ENCODE measurements at regions of chr1 and their contacts with region 1.

Region 1: GRCh38 chr1:182143154-182143657 is 81.7 kb upstream of the ZNF648 start:
- DNase-seq: peak; percentile 94
- H3K4me3 Mint-ChIP-seq: peak overlapping the region; percentile 28
- H3K27ac Mint-ChIP-seq: peak overlapping the region; percentile 97
- H3K4me1 Mint-ChIP-seq: peaks cover 53% of the 10 kb centered on the region
- H3K27me3 Mint-ChIP-seq: no peaks in the 10 kb centered on the region
- CTCF ChIP-seq: peak; percentile 95

Region 2: GRCh38 chr1:181855380-181855779 is 287.8 kb before region 1 on chr1:
- CTCF ChIA-PET with region 1: no interaction called
- POLR2A ChIA-PET with region 1: no interaction called
- intact Hi-C with region 1: no loop called
- DNase-seq: no peak
- H3K4me3 Mint-ChIP-seq: no peak overlapping the region
- H3K27ac Mint-ChIP-seq: no peak overlapping the region
- H3K4me1 Mint-ChIP-seq: no peaks in the 10 kb centered on the region
- H3K27me3 Mint-ChIP-seq: no peaks in the 10 kb centered on the region
- CTCF ChIP-seq: no peak

Region 3: GRCh38 chr1:182029379-182030331 is 113.6 kb before region 1 on chr1:
- CTCF ChIA-PET with region 1: no interaction called
- POLR2A ChIA-PET with region 1: no interaction called
- intact Hi-C with region 1: no loop called
- DNase-seq: peak; percentile 99
- H3K4me3 Mint-ChIP-seq: peak overlapping the region; percentile 85
- H3K27ac Mint-ChIP-seq: peak overlapping the region; percentile 91
- H3K4me1 Mint-ChIP-seq: peaks cover 10% of the 10 kb centered on the region
- H3K27me3 Mint-ChIP-seq: no peaks in the 10 kb centered on the region
- CTCF ChIP-seq: peak; percentile 42

Region 4: DNA sequence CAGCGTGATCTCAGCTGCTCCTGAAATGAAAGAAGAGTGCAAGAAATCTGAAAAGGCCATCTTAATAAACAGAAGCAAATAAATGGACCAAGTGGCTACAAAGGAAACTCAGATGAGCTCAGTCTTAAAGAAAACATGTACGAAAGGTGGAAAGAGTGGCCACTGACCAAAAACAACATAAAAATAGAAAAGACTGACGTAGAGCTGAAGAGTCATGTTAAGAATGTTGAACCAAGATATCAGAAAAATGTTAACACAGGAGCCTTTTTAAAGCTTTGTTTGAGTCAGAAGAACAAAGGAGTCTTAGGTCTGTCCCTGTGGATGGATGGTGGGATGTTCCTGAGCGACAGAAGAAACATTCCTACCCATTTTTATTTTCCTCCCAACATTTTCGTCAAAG is 50.9 kb before region 1 on chr1:
- CTCF ChIA-PET with region 1: interaction called, 175 read pairs
- POLR2A ChIA-PET with region 1: interaction called, 51 read pairs
- intact Hi-C with region 1: no loop called
- DNase-seq: no peak
- H3K4me3 Mint-ChIP-seq: no peak overlapping the region
- H3K27ac Mint-ChIP-seq: no peak overlapping the region
- H3K4me1 Mint-ChIP-seq: peaks cover 15% of the 10 kb centered on the region
- H3K27me3 Mint-ChIP-seq: no peaks in the 10 kb centered on the region
- CTCF ChIP-seq: no peak

Region 5: GRCh38 chr1:182175361-182175931 is 32.2 kb after region 1 on chr1:
- CTCF ChIA-PET with region 1: interaction called, 163 read pairs
- POLR2A ChIA-PET with region 1: interaction called, 321 read pairs
- intact Hi-C with region 1: no loop called
- DNase-seq: peak; percentile 84
- H3K4me3 Mint-ChIP-seq: no peak overlapping the region
- H3K27ac Mint-ChIP-seq: peak overlapping the region; percentile 74
- H3K4me1 Mint-ChIP-seq: peaks cover 40% of the 10 kb centered on the region
- H3K27me3 Mint-ChIP-seq: no peaks in the 10 kb centered on the region
- CTCF ChIP-seq: no peak

Region 6: DNA sequence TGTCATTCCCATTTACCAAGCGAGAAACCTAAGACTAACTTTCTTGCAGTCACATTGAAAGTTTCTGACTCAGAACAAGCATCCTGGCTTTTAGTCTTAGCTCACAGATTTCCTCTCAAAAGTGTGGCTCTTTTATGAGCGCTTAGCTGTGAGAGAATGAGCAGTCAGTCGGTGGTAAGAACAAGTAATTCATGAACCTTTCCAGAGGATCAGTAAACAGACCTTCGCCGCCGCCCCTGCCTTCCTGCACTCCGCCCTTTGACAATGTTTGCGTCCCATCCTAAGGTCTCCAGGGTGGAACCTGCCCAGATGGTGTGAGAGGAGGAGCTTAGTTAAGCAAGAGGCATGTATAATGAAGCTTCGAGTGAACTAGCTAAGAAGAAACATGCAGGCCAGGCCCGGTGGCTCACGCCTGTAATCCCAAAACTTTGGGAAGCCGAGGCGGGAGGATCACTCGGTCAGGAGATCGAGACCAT is 106.0 kb after region 1 on chr1:
- CTCF ChIA-PET with region 1: interaction called, 15 read pairs
- POLR2A ChIA-PET with region 1: interaction called, 15 read pairs
- intact Hi-C with region 1: no loop called
- DNase-seq: no peak
- H3K4me3 Mint-ChIP-seq: no peak overlapping the region
- H3K27ac Mint-ChIP-seq: no peak overlapping the region
- H3K4me1 Mint-ChIP-seq: peaks cover 5% of the 10 kb centered on the region
- H3K27me3 Mint-ChIP-seq: no peaks in the 10 kb centered on the region
- CTCF ChIP-seq: no peak

Region 7: GRCh38 chr1:182337736-182338571 is 194.7 kb after region 1 on chr1:
- CTCF ChIA-PET with region 1: interaction called, 10 read pairs
- POLR2A ChIA-PET with region 1: no interaction called
- intact Hi-C with region 1: no loop called
- DNase-seq: no peak
- H3K4me3 Mint-ChIP-seq: no peak overlapping the region
- H3K27ac Mint-ChIP-seq: no peak overlapping the region
- H3K4me1 Mint-ChIP-seq: no peaks in the 10 kb centered on the region
- H3K27me3 Mint-ChIP-seq: no peaks in the 10 kb centered on the region
- CTCF ChIP-seq: no peak

Region 8: DNA sequence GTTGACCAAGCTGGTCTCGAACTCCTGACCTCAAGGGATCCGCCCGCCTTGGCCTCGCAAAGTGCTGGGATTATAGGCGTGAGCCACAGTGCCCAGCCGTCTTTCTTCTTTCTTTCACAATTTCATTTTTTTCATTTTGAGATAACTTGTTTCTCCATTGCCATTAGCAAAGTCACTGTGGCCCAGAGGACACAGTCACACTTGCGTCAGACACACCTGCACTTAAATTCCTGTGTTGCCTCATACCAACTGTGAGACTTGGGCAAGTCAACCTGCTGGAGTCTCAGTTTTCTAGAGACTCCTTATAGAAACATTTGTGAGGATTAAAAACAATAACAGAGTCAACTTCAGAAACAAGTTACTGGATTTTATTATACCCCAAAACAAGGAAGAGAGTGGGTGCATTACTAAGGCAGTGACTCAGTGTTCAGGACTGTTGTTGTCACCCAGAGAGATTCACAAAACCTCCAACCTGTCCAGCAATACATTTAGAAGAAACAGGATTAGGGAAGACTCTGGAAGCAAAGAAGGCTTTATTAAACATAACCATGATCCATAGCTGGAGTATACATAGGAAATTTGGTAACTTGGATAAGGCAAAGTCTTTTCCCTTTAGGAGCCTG is 254.7 kb after region 1 on chr1:
- CTCF ChIA-PET with region 1: interaction called, 353 read pairs
- POLR2A ChIA-PET with region 1: no interaction called
- intact Hi-C with region 1: loop called (anchors 1 kb)
- DNase-seq: peak; percentile 81
- H3K4me3 Mint-ChIP-seq: peak overlapping the region; percentile 0
- H3K27ac Mint-ChIP-seq: peak overlapping the region; percentile 76
- H3K4me1 Mint-ChIP-seq: peaks cover 22% of the 10 kb centered on the region
- H3K27me3 Mint-ChIP-seq: no peaks in the 10 kb centered on the region
- CTCF ChIP-seq: no peak

Measured in MCF 10A (cell line).